ENCODE measurements at regions of chr17 and their contacts with region 1.

Region 1: DNA sequence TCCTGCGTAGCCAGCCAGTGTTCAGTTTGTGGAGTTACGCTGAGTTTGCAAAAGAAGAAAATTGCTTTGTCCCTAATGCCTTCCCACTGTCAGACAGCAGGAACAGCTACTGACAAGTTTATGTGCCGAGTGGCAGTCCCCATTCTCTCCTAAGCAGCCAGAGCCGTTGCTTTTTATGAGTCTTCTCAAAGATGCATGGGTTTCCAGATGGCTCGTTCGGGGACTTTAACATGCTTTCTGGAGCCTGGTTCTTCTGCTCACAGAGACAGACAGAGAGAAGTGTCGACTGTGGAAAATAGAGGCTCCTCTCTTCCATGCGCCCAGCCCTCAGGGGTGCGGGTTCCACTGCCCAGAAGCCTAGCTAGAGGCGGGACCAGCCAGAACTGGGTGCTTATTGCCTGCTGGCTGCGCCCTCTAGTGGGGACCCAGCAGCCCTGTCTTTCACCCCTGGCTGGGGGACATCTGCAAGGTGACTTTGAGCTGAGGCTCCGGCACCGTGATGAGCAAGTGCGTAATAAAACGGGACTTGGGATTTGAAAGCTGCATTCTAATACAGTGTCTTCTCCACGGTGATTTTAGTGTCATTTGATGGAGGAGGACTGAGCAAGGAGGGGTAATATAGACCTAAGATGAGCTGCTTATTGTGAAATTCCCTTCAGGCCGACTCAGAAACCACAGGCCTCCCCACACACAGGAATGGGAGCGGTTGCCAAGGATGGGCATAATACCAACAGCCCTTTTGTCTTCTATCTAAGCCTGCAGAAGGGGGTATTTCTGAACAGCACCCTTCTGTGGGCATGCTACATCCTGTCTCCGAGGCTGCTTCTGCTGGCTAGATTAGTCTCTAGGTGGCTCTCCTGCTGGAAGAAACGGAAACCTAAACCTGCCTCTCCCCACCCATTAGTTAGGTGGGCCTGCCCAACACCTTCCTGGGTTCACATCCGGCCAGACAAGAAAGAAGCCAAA is 73.1 kb downstream of the CCDC182 start:
- DNase-seq: peak; percentile 93
- H3K4me3 ChIP-seq: no peak overlapping the region
- H3K27ac ChIP-seq: peak overlapping the region; percentile 71
- H3K4me1 ChIP-seq: peaks cover 25% of the 10 kb centered on the region
- H3K27me3 ChIP-seq: no peaks in the 10 kb centered on the region
- CTCF ChIP-seq: peak; percentile 95

Region 2: GRCh38 chr17:57243171-57243948 is 428.6 kb before region 1 on chr17:
- CTCF ChIA-PET with region 1: interaction called, 9 read pairs
- dilution Hi-C with region 1: no loop called
- in situ Hi-C with region 1: no loop called
- intact Hi-C with region 1: loop called (anchors 1 kb)
- DNase-seq: peak; percentile 45
- H3K4me3 ChIP-seq: no peak overlapping the region
- H3K27ac ChIP-seq: no peak overlapping the region
- H3K4me1 ChIP-seq: no peaks in the 10 kb centered on the region
- H3K27me3 ChIP-seq: no peaks in the 10 kb centered on the region
- CTCF ChIP-seq: peak; percentile 100

Region 3: GRCh38 chr17:57714665-57715180 is 42.8 kb after region 1 on chr17:
- CTCF ChIA-PET with region 1: no interaction called
- dilution Hi-C with region 1: no loop called
- in situ Hi-C with region 1: no loop called
- intact Hi-C with region 1: no loop called
- DNase-seq: no peak
- H3K4me3 ChIP-seq: no peak overlapping the region
- H3K27ac ChIP-seq: no peak overlapping the region
- H3K4me1 ChIP-seq: no peaks in the 10 kb centered on the region
- H3K27me3 ChIP-seq: no peaks in the 10 kb centered on the region
- CTCF ChIP-seq: no peak